ENCODE measurements at regions of chr19 and their contacts with region 1.

Region 1: DNA sequence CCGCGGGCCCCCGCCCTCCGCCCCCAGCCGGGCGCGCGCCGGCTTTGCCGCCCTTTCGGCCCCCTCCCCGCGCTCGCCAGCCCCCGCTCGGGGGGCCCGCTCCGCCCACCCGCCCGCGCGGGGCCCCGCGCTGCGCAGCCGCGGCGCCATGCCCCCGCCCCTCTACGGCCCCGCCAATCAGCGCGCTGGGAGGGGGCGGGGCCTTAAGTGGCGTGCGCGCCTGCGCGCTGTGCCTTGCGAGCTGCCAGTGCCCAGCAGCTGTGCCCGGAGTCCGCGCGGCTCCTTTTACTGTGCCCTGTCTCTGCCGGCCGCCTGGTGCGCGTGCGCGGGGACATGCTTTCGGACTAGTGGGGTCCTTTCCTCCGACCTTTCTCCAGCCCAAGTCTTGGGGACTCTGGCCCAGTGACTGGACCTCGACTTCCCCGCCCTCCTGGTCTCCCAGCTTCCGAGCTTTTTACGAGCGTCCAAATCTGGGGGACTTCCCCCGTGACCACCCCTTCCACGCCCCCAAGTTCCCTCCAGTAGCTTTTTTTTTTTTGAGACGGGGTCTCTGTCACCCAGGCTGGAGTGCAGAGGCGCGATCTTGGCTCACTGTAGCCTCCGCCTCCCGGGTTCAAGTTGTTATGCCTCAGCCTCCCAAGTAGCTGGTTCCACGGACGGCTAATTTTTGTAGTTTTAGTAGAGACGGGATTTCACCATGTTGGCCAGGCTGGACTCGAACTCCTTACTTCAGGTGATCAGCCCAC is at the start of gene MBD3:
- DNase-seq: peak; percentile 86 to 97 (median 94)

Region 2: GRCh38 chr19:1568320-1569019 is 24.5 kb before region 1 on chr19 and contains the start of gene MEX3D:
- intact Hi-C with region 1: no loop called
- DNase-seq: peak in 41 of 42 donors; percentile 14 to 86 (median 67)

Region 3: GRCh38 chr19:1605236-1606137 is 12.6 kb after region 1 on chr19 and contains the start of gene UQCR11:
- intact Hi-C with region 1: loop called (anchors 1 kb)
- DNase-seq: peak; percentile 93 to 99 (median 97)

Region 4: GRCh38 chr19:1624458-1624857 is 31.5 kb after region 1 on chr19:
- intact Hi-C with region 1: no loop called
- DNase-seq: peak in 40 of 42 donors; percentile 6 to 78 (median 51)

Measured in head of caudate nucleus (tissue), 42 donors.